Endothelial cell of umbilical vein (primary cell): ENCODE measurements at regions of chr16 and their contacts with region 1.

Region 1: DNA sequence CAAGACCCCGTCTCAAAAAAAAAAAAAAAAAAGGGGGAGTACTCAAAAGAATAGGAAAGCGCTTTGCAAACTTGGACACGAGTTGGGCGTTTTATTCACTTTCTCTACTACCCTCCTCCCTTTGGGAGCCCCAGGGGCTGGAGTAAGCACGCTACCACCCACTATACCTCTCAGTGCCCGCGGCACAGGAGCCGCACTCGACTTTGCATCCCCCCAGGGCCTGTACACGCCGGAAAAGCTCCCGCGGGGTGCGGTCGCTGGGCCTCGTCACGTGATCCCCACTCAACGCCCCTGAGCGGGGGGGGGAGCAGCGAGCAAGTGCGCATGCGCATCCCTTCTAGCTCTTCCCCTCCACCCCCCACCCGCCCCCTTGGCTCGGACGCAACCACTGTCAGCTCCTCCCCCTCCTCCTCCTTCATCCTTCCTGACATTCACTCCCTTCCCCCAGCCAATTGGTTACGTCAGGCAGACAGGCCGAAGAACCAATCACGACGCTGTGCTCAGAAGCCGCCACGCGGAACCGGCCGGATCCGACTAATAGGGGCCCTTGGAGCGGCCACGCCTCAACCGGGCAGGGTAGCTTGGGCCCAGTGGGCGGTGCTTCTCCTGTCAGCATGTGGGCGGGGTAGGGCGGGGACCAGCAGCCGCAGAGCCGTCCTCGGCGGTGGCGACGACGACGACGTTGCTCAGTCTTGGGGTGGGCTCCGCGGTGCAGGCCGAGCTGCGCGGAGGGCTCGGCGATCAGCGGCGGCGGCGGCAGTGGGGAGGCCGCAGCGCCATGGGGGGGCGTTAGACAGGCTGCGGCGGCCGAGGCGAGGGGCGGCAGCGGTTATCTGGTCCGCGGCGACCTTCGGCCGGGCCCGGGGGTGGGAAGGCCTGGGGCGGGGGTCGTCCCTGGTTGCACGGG is at the start of gene HAPSTR1:
- DNase-seq: peak; percentile 100
- H3K4me3 ChIP-seq: peak within 1 kb of the TSS; percentile 73 to 89 (median 80)
- H3K27ac ChIP-seq: peak within 1 kb of the TSS; percentile 78
- H3K4me1 ChIP-seq: peaks cover 32% of the 10 kb centered on the region
- H3K27me3 ChIP-seq: no peaks in the 10 kb centered on the region
- CTCF ChIP-seq: no peak
- POLR2A ChIP-seq: peak; percentile 96
- total RNA-seq, gene HAPSTR1: 60.1 and 63.7 TPM in 2 replicates

Region 2: GRCh38 chr16:8797364-8798173 is 293.6 kb before region 1 on chr16 and contains the starts of genes PMM2 and TMEM186:
- CTCF ChIA-PET with region 1: no interaction called
- POLR2A ChIA-PET with region 1: interaction called, 4 read pairs
- dilution Hi-C with region 1: no loop called
- intact Hi-C with region 1: loop called (anchors 5 kb)
- DNase-seq: peak; percentile 98
- H3K4me3 ChIP-seq: peak within 1 kb of the TSS; percentile 65 to 95 (median 83)
- H3K27ac ChIP-seq: peak within 1 kb of the TSS; percentile 62
- H3K4me1 ChIP-seq: peaks cover 25% of the 10 kb centered on the region
- H3K27me3 ChIP-seq: no peaks in the 10 kb centered on the region
- CTCF ChIP-seq: no peak
- POLR2A ChIP-seq: peak; percentile 86
- total RNA-seq, gene PMM2: 61.3 and 62.8 TPM in 2 replicates
- total RNA-seq, gene TMEM186: 8.3 and 9.6 TPM in 2 replicates

Region 3: GRCh38 chr16:8878521-8878911 is 212.7 kb before region 1 on chr16:
- CTCF ChIA-PET with region 1: no interaction called
- POLR2A ChIA-PET with region 1: no interaction called
- dilution Hi-C with region 1: no loop called
- intact Hi-C with region 1: no loop called
- DNase-seq: no peak
- H3K4me3 ChIP-seq: no peak overlapping the region
- H3K27ac ChIP-seq: no peak overlapping the region
- H3K4me1 ChIP-seq: no peaks in the 10 kb centered on the region
- H3K27me3 ChIP-seq: peaks cover 0 to 2% of the 10 kb centered on the region in 2 experiments
- CTCF ChIP-seq: no peak
- POLR2A ChIP-seq: no peak

Region 4: DNA sequence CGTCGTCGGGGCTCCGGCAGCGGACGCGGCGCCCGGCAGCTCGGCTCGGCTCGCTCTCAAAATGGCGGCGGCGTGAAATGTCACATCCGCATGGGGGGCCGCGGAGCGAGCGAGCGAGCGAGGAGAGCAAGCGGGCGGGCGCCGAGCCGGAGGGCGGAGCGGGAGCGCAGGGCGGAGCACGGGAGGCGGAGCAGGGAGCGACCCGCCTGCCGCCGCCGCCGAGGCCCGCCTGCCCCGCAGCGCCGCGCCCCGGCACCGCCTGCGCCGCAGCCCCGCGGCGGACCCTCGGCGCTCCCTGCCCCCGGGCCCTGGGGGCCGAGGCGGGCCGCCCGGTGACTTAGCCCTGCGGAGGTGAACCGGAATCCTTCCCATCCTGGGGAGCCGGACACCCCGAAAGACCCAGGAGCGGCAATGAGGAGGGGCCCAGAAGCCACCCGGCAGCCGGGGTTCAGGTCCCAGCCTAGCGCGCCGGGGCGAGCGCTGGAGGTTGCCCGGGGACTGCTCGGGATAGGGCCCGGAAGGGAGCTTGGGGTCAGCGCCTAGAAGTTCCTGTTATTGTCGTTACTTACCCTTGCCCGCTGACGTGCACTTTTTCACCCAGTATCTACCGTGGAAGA is 127.3 kb before region 1 on chr16 and contains the start of gene USP7:
- CTCF ChIA-PET with region 1: no interaction called
- POLR2A ChIA-PET with region 1: no interaction called
- dilution Hi-C with region 1: no loop called
- intact Hi-C with region 1: loop called (anchors 1 kb)
- DNase-seq: peak; percentile 88
- H3K4me3 ChIP-seq: peak within 1 kb of the TSS; percentile 45 to 82 (median 64)
- H3K27ac ChIP-seq: peak within 1 kb of the TSS; percentile 51
- H3K4me1 ChIP-seq: peaks cover 34% of the 10 kb centered on the region
- H3K27me3 ChIP-seq: no peaks in the 10 kb centered on the region
- CTCF ChIP-seq: no peak
- POLR2A ChIP-seq: peak; percentile 68
- total RNA-seq, gene USP7: 130 and 138 TPM in 2 replicates

Region 5: GRCh38 chr16:9068886-9069285 is 22.3 kb before region 1 on chr16:
- CTCF ChIA-PET with region 1: no interaction called
- POLR2A ChIA-PET with region 1: no interaction called
- dilution Hi-C with region 1: no loop called
- intact Hi-C with region 1: no loop called
- DNase-seq: no peak
- H3K4me3 ChIP-seq: no peak overlapping the region
- H3K27ac ChIP-seq: no peak overlapping the region
- H3K4me1 ChIP-seq: no peaks in the 10 kb centered on the region
- H3K27me3 ChIP-seq: no peaks in the 10 kb centered on the region
- CTCF ChIP-seq: no peak
- POLR2A ChIP-seq: no peak

Region 6: GRCh38 chr16:9079430-9079812 is 11.8 kb before region 1 on chr16:
- CTCF ChIA-PET with region 1: interaction called, 8 read pairs
- POLR2A ChIA-PET with region 1: interaction called, 26 read pairs
- dilution Hi-C with region 1: no loop called
- intact Hi-C with region 1: loop called (anchors 1 kb)
- DNase-seq: no peak
- H3K4me3 ChIP-seq: no peak overlapping the region
- H3K27ac ChIP-seq: peak overlapping the region; percentile 41
- H3K4me1 ChIP-seq: peaks cover 5% of the 10 kb centered on the region
- H3K27me3 ChIP-seq: no peaks in the 10 kb centered on the region
- CTCF ChIP-seq: no peak
- POLR2A ChIP-seq: no peak

Region 7: DNA sequence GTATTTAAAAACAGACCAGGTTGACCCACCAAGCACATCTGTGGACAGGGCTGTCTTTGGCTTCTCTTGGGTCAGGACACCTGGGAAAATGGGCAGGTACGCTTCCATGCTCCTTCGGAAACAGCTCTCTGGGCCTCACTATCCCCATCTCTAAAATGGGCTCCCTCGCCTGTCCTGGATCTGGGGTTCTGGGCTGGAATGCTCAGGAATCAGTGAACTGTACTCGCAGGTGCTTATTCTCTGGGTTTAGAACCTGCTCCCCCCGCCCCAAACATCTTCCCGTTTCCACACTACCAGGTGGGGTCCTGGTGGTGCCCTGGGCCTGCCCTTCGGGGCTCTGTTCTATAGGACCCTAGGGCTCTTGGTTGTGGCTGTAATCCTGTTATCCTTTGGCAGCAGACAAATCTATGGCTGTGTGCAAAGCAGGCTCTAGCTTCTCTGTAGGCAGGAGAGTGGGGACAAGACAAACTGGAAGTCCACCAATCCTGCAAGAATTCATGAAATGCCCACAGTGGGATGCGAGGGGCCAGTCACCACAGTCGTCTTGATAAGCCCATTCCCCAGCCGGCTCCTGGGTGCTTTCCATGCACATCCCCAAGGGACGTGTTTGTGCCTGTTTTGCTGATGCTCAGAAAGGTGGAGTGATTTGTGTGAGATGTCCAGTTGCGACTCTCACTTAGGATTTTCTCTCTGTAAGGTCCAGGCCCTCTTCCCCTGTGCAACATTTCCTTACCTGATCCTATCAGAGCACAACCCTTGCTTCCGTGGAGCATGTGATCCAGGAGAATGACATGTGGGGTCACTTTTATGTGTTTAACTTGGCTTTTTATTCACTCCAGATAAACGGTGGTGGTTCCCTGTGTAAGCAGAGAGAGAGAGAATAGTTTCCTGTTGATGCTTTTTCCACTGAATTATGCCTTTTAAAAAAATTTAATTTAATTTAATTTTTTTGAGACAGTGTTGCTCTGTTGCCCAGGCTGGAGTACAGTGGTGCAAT is 37.4 kb after region 1 on chr16:
- CTCF ChIA-PET with region 1: interaction called, 5 read pairs
- POLR2A ChIA-PET with region 1: interaction called, 5 read pairs
- dilution Hi-C with region 1: no loop called
- intact Hi-C with region 1: loop called (anchors 1 kb)
- DNase-seq: peak; percentile 44
- H3K4me3 ChIP-seq: no peak overlapping the region
- H3K27ac ChIP-seq: peak overlapping the region; percentile 73
- H3K4me1 ChIP-seq: peaks cover 23% of the 10 kb centered on the region
- H3K27me3 ChIP-seq: no peaks in the 10 kb centered on the region
- CTCF ChIP-seq: no peak
- POLR2A ChIP-seq: no peak

Region 8: DNA sequence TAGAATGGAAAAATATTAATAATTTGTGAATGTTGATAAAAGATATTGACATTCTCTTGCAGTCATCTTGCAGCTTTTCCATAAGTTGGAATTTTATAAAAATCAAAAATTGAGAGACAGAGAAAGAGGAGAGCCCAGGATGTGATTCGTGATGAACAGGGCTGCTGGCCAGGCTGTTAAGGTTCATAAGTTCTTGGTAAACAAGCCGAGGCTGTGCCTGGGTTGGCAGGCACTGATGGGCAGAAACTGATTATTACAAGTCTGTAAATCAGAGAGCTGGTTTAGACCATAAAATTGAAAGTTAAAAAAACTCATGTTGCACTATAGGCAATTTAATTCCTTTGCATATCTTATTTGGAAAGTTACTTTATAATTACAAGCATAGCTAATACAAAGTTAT is 533.9 kb after region 1 on chr16:
- CTCF ChIA-PET with region 1: no interaction called
- POLR2A ChIA-PET with region 1: no interaction called
- dilution Hi-C with region 1: no loop called
- intact Hi-C with region 1: no loop called
- DNase-seq: no peak
- H3K4me3 ChIP-seq: no peak overlapping the region
- H3K27ac ChIP-seq: no peak overlapping the region
- H3K4me1 ChIP-seq: no peaks in the 10 kb centered on the region
- H3K27me3 ChIP-seq: no peaks in the 10 kb centered on the region
- CTCF ChIP-seq: no peak
- POLR2A ChIP-seq: no peak